SK-N-SH (cell line): ENCODE measurements at regions of chr20 and their contacts with region 1.

Region 1: DNA sequence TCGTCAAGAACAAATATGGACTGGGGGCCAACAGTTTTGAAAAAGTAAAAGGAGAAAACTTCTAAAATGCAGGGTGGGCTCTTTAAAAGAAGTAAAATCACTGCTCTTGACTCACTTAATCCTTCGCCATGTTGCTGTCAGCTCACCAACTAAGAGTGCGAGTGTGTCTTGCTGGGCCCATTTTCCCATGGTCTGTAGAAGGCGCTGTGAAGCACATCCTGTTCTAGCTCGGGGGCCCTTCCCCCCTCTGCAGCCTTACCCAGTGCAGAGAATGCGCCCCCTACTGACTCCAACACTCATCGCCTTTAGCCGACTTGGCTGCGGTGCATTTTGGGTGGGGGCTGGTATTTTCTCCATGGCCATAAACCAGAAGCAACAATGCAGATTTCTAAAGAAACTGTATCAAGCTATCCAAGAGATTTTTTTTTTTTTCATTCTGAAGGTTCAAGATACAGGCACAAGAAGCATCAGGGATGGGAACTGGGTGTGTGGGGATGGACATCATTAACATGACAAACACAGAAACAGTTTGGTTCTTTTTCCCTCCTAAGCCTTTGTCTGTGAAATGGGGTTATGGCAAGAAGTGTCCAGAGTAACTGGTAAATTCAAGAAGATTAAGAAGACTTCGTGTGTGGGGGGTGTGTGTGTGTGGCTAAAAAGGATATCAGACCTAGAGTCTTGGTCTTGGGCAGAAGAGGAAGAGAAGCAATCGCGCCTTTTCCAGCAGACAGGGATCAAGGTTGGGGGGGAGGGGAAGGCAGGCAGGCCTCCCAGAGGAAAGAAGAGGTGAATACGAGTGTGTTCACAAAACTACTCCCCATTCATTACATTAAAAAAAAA is 1.7 kb downstream of the ADNP start:
- DNase-seq: peak; percentile 84
- H3K4me3 ChIP-seq: peak overlapping the region; percentile 82 to 94
- H3K27ac ChIP-seq: peak overlapping the region; percentile 82 to 99
- H3K4me1 ChIP-seq: peaks cover 21 to 36% of the 10 kb centered on the region in 2 experiments
- H3K27me3 ChIP-seq: no peaks in the 10 kb centered on the region
- CTCF ChIP-seq: peak; percentile 99
- EP300 ChIP-seq: peak; percentile 39 to 48; a peak in 2 of 4 replicates
- RAD21 ChIP-seq: peak; percentile 86

Region 2: GRCh38 chr20:50790651-50791277 is 138.8 kb before region 1 on chr20:
- CTCF ChIA-PET with region 1: interaction called, 340 read pairs
- POLR2A ChIA-PET with region 1: interaction called, 40 read pairs
- DNase-seq: peak; percentile 94
- H3K4me3 ChIP-seq: no peak overlapping the region; a peak in 1 of 4 replicates
- H3K27ac ChIP-seq: peak overlapping the region; percentile 73 to 80
- H3K4me1 ChIP-seq: peaks cover 12 to 21% of the 10 kb centered on the region in 2 experiments
- H3K27me3 ChIP-seq: no peaks in the 10 kb centered on the region
- CTCF ChIP-seq: peak; percentile 74
- EP300 ChIP-seq: peak; percentile 30 to 36; a peak in 2 of 4 replicates
- RAD21 ChIP-seq: peak; percentile 40

Region 3: DNA sequence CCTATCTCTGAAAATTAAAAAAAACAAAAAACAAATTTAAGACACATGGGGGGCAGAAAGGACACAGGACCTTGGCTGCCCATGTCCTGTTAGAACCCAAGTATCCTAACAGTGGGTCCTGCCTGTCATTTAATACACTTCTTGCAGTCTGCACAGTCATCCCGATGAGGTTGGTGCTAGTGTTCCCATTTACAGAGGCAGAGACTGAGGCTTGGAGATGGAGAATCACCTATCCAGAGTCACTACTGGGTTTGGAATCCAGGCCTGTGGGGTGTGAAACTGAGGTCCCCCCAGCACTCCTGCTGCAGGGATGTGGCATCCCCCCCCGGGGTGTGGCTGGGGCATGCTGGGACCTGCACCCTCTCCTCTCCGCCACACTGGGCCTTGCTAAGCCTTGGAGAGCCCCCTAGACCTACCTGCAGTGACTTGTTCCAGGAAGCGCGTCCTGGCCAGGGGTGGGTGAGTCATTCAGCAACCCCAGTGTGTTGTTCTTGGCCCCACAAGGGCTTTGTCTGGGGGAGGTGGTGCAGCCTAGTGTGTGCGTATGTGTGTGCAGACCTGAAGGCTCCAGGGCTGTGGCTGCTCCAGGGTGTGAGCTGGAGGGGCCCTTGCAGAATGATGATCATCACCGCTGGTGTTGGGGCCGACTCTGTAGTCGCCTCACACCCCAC is 85.0 kb before region 1 on chr20:
- CTCF ChIA-PET with region 1: interaction called, 20 read pairs
- POLR2A ChIA-PET with region 1: no interaction called
- DNase-seq: no peak
- H3K4me3 ChIP-seq: no peak overlapping the region
- H3K27ac ChIP-seq: no peak overlapping the region
- H3K4me1 ChIP-seq: peaks cover 9 to 31% of the 10 kb centered on the region in 2 experiments; a peak in 3 of 4 replicates
- H3K27me3 ChIP-seq: no peaks in the 10 kb centered on the region
- CTCF ChIP-seq: no peak
- EP300 ChIP-seq: no peak
- RAD21 ChIP-seq: no peak

Region 4: GRCh38 chr20:50898475-50898874 is 31.0 kb before region 1 on chr20:
- CTCF ChIA-PET with region 1: interaction called, 19 read pairs
- POLR2A ChIA-PET with region 1: no interaction called
- DNase-seq: no peak
- H3K4me3 ChIP-seq: no peak overlapping the region
- H3K27ac ChIP-seq: no peak overlapping the region
- H3K4me1 ChIP-seq: no peaks in the 10 kb centered on the region; a peak in 1 of 4 replicates
- H3K27me3 ChIP-seq: no peaks in the 10 kb centered on the region
- CTCF ChIP-seq: no peak
- EP300 ChIP-seq: no peak
- RAD21 ChIP-seq: no peak

Region 5: GRCh38 chr20:50913690-50914375 is 15.7 kb before region 1 on chr20:
- CTCF ChIA-PET with region 1: interaction called, 137 read pairs
- POLR2A ChIA-PET with region 1: interaction called, 5 read pairs
- DNase-seq: no peak
- H3K4me3 ChIP-seq: no peak overlapping the region
- H3K27ac ChIP-seq: peak overlapping the region; percentile 71
- H3K4me1 ChIP-seq: peaks cover 60 to 79% of the 10 kb centered on the region in 2 experiments
- H3K27me3 ChIP-seq: no peaks in the 10 kb centered on the region
- CTCF ChIP-seq: no peak
- EP300 ChIP-seq: peak in 1 of 2 experiments; percentile 17; a peak in 1 of 4 replicates
- RAD21 ChIP-seq: no peak

Region 6: DNA sequence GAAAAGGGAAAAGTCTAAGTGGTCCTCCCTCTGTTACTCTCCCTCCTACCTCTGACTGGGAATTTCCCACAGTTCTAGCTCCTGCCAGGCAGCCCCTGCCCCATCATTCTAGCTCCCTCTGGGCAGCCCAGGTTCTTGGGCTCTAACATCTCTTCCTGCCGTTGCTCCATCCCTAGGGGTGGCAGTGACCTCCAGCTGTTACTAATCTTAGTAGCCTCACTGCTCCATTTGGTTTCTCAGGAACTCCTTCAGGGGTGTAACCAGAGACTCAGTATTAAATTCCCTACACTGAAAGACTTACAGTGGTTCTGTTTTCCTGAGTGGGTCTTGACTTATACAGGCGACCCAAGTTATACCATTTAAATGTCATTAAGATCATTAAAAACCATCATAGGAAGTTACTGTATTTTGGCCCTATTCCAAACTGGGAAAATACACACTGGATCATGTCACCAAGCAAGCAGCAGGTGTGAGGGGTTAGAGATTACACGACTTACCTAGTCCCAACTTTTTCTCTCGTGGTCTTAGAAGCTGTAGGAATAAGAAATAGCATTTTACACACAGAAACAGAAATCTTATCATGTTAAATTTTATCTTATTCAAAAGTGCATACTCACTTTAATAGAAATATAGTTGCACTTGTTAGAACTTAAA is 18.7 kb after region 1 on chr20:
- CTCF ChIA-PET with region 1: interaction called, 10 read pairs
- POLR2A ChIA-PET with region 1: no interaction called
- DNase-seq: no peak
- H3K4me3 ChIP-seq: no peak overlapping the region
- H3K27ac ChIP-seq: no peak overlapping the region
- H3K4me1 ChIP-seq: no peaks in the 10 kb centered on the region; a peak in 1 of 4 replicates
- H3K27me3 ChIP-seq: no peaks in the 10 kb centered on the region
- CTCF ChIP-seq: no peak
- EP300 ChIP-seq: no peak
- RAD21 ChIP-seq: no peak